Activated CD4-positive, alpha-beta T cell treated with anti-CD3 and anti-CD28 coated beads for 36 hours (primary cell): ENCODE measurements at regions of chr19 and their contacts with region 1.

Region 1: DNA sequence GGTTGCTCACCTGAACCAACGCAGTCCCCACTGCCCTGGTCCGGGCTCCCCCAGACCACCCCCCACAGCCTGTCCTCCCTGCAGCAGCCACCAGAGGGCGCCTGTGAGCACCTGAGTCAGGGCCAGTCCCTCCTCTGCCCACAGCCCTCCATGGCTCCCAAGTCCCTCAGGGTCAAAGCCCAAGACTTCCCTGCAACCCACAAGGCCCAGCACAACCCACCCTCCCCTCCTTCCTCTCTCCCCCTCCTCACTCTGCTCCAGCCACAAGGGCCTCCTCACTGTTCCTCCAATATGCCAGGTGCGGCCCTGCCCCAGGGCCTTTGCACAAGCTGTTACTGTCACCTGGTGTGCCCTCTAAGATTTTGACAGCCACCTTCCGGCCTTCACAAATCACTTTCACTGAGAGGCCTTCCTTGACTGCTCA is 10.9 kb downstream of the GNA15 start:
- DNase-seq: peak; percentile 83
- ATAC-seq: peak; percentile 55
- H3K4me3 Mint-ChIP-seq: no peak overlapping the region
- H3K27ac Mint-ChIP-seq: no peak overlapping the region
- H3K4me1 Mint-ChIP-seq: peaks cover 20% of the 10 kb centered on the region
- H3K27me3 Mint-ChIP-seq: no peaks in the 10 kb centered on the region

Region 2: GRCh38 chr19:3163230-3163886 is 16.7 kb after region 1 on chr19:
- CTCF ChIA-PET with region 1: interaction called, 7 read pairs
- POLR2A ChIA-PET with region 1: no interaction called
- intact Hi-C with region 1: loop called (anchors 1 kb)
- DNase-seq: peak; percentile 82
- ATAC-seq: peak; percentile 82
- H3K4me3 Mint-ChIP-seq: no peak overlapping the region
- H3K27ac Mint-ChIP-seq: peak overlapping the region; percentile 42
- H3K4me1 Mint-ChIP-seq: peaks cover 23% of the 10 kb centered on the region
- H3K27me3 Mint-ChIP-seq: no peaks in the 10 kb centered on the region

Region 3: GRCh38 chr19:3224346-3225168 is 77.9 kb after region 1 on chr19 and contains the start of gene CELF5:
- CTCF ChIA-PET with region 1: no interaction called
- POLR2A ChIA-PET with region 1: no interaction called
- intact Hi-C with region 1: no loop called
- DNase-seq: peak; percentile 77
- ATAC-seq: peak; percentile 77
- H3K4me3 Mint-ChIP-seq: no peak within 1 kb of the TSS
- H3K27ac Mint-ChIP-seq: no peak within 1 kb of the TSS
- H3K4me1 Mint-ChIP-seq: no peaks in the 10 kb centered on the region
- H3K27me3 Mint-ChIP-seq: peaks cover 24% of the 10 kb centered on the region
- total RNA-seq, gene CELF5: 0.18 to 0.21 TPM